Naive thymus-derived CD8-positive, alpha-beta T cell (primary cell): ENCODE measurements at regions of chr17 and their contacts with region 1.

Region 1: GRCh38 chr17:35242805-35243560 is at the start of gene SLFN5:
- DNase-seq: peak; percentile 82 to 98 (median 94)
- ATAC-seq: peak; percentile 75 to 86
- H3K4me3 Mint-ChIP-seq: peak within 1 kb of the TSS; percentile 93 to 100 (median 99)
- H3K27ac Mint-ChIP-seq: peak within 1 kb of the TSS; percentile 97 to 100 (median 99)
- H3K4me1 Mint-ChIP-seq: peaks cover 36 to 75% (median 59%) of the 10 kb centered on the region in 4 donors
- H3K27me3 Mint-ChIP-seq: no peaks in the 10 kb centered on the region
- polyA plus RNA-seq, gene SLFN5: 73.8 to 161 (median 87.4) TPM

Region 2: GRCh38 chr17:35141681-35142466 is 101.1 kb before region 1 on chr17 and contains the start of gene NLE1:
- POLR2A ChIA-PET with region 1: interaction called, 13 read pairs
- DNase-seq: peak; percentile 77 to 93 (median 88)
- ATAC-seq: peak; percentile 95 to 96
- H3K4me3 Mint-ChIP-seq: peak within 1 kb of the TSS; percentile 76 to 92 (median 84)
- H3K27ac Mint-ChIP-seq: peak within 1 kb of the TSS; percentile 51 to 94 (median 88)
- H3K4me1 Mint-ChIP-seq: peaks cover 5 to 26% (median 15%) of the 10 kb centered on the region in 4 donors
- H3K27me3 Mint-ChIP-seq: no peaks in the 10 kb centered on the region
- polyA plus RNA-seq, gene NLE1: 4.6 to 6.4 (median 5.3) TPM

Region 3: GRCh38 chr17:35183332-35183731 is 59.7 kb before region 1 on chr17:
- POLR2A ChIA-PET with region 1: interaction called, 122 read pairs
- DNase-seq: no peak
- ATAC-seq: no peak
- H3K4me3 Mint-ChIP-seq: peak overlapping the region in 1 of 10 donors; percentile 29
- H3K27ac Mint-ChIP-seq: peak overlapping the region in 4 of 10 donors; percentile 41 to 84 (median 70)
- H3K4me1 Mint-ChIP-seq: peaks cover 43 to 87% (median 69%) of the 10 kb centered on the region in 4 donors
- H3K27me3 Mint-ChIP-seq: no peaks in the 10 kb centered on the region

Region 4: GRCh38 chr17:35257208-35257659 is 14.3 kb after region 1 on chr17:
- POLR2A ChIA-PET with region 1: interaction called, 20 read pairs
- DNase-seq: no peak
- ATAC-seq: no peak
- H3K4me3 Mint-ChIP-seq: peak overlapping the region in 7 of 10 donors; percentile 4 to 62 (median 33)
- H3K27ac Mint-ChIP-seq: peak overlapping the region; percentile 64 to 91 (median 86)
- H3K4me1 Mint-ChIP-seq: peaks cover 39 to 85% (median 81%) of the 10 kb centered on the region in 4 donors
- H3K27me3 Mint-ChIP-seq: no peaks in the 10 kb centered on the region

Region 5: GRCh38 chr17:35312790-35313711 is 70.1 kb after region 1 on chr17:
- POLR2A ChIA-PET with region 1: interaction called, 48 read pairs
- DNase-seq: peak; percentile 65 to 97 (median 94)
- ATAC-seq: peak; percentile 87 to 91
- H3K4me3 Mint-ChIP-seq: peak overlapping the region; percentile 91 to 100 (median 96)
- H3K27ac Mint-ChIP-seq: peak overlapping the region; percentile 97 to 99 (median 98)
- H3K4me1 Mint-ChIP-seq: peaks cover 39 to 63% (median 54%) of the 10 kb centered on the region in 4 donors
- H3K27me3 Mint-ChIP-seq: no peaks in the 10 kb centered on the region

Region 6: GRCh38 chr17:35359398-35359797 is 116.4 kb after region 1 on chr17:
- POLR2A ChIA-PET with region 1: no interaction called
- DNase-seq: no peak
- ATAC-seq: no peak
- H3K4me3 Mint-ChIP-seq: no peak overlapping the region
- H3K27ac Mint-ChIP-seq: no peak overlapping the region
- H3K4me1 Mint-ChIP-seq: peaks cover 3 to 27% (median 17%) of the 10 kb centered on the region in 4 donors
- H3K27me3 Mint-ChIP-seq: no peaks in the 10 kb centered on the region

Region 7: DNA sequence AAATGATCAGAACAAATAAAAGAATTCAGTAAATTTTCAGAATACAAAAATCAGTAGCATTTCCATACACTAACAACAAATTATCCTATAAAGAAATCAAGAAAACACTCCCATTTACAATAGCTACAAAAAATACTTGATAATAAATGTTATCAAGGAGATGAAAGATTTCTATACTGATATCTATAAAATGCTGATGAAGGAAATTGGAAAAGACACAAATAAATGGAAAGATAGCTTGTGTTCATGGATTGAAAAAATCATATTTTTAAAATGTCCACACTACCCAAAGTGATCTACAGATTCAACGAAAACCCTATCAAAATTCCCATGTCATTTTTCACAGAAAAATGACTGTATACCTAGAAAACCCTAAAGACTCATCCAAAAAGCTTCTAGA is 171.3 kb after region 1 on chr17:
- POLR2A ChIA-PET with region 1: no interaction called
- DNase-seq: no peak
- ATAC-seq: no peak
- H3K4me3 Mint-ChIP-seq: no peak overlapping the region
- H3K27ac Mint-ChIP-seq: no peak overlapping the region
- H3K4me1 Mint-ChIP-seq: no peaks in the 10 kb centered on the region
- H3K27me3 Mint-ChIP-seq: no peaks in the 10 kb centered on the region

Region 8: GRCh38 chr17:35540589-35541404 is 297.8 kb after region 1 on chr17:
- POLR2A ChIA-PET with region 1: interaction called, 77 read pairs
- DNase-seq: peak in 3 of 10 donors; percentile 13 to 38 (median 33)
- ATAC-seq: peak; percentile 37
- H3K4me3 Mint-ChIP-seq: peak overlapping the region; percentile 70 to 98 (median 89)
- H3K27ac Mint-ChIP-seq: peak overlapping the region; percentile 80 to 100 (median 95)
- H3K4me1 Mint-ChIP-seq: peaks cover 18 to 62% (median 51%) of the 10 kb centered on the region in 4 donors
- H3K27me3 Mint-ChIP-seq: no peaks in the 10 kb centered on the region